CD8-positive, alpha-beta T cell (primary cell): ENCODE measurements at regions of chr7 and their contacts with region 1.

Region 1: GRCh38 chr7:11212080-11212711 is 238.5 kb downstream of the PHF14 start:
- DNase-seq: peak in 6 of 9 experiments; percentile 15 to 67 (median 38)
- ATAC-seq: peak; percentile 69
- H3K4me3 ChIP-seq: no peak overlapping the region
- H3K4me3 Mint-ChIP-seq: no peak overlapping the region
- H3K27ac ChIP-seq: no peak overlapping the region
- H3K27ac Mint-ChIP-seq: no peak overlapping the region
- H3K4me1 ChIP-seq: no peaks in the 10 kb centered on the region
- H3K4me1 Mint-ChIP-seq: peaks cover 2% of the 10 kb centered on the region
- H3K27me3 ChIP-seq: no peaks in the 10 kb centered on the region
- H3K27me3 Mint-ChIP-seq: peaks cover 4% of the 10 kb centered on the region
- CTCF ChIP-seq: peak; percentile 93

Region 2: DNA sequence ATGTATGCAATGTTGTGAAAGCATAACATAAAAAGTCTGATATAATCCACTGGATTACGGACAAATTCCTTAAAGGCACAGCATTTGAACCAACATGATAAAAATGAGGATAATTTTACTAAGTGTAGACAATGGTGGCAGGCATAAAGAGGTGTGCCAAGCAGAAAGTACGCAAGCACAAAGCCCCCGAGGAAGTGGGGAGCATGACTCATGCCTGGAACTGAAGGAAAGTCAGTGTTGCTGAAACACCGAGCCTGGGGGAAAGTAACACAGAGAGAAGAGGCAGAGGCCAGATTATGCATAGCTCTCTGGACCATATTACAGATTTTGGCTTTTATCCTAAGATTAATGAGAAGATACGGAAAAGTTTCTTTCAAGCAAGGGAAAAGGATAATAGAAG is 728.5 kb before region 1 on chr7:
- CTCF ChIA-PET with region 1: no interaction called
- POLR2A ChIA-PET with region 1: no interaction called
- intact Hi-C with region 1: no loop called
- DNase-seq: no peak
- ATAC-seq: no peak
- H3K4me3 ChIP-seq: no peak overlapping the region
- H3K4me3 Mint-ChIP-seq: no peak overlapping the region
- H3K27ac ChIP-seq: no peak overlapping the region
- H3K27ac Mint-ChIP-seq: no peak overlapping the region
- H3K4me1 ChIP-seq: no peaks in the 10 kb centered on the region
- H3K4me1 Mint-ChIP-seq: no peaks in the 10 kb centered on the region
- H3K27me3 ChIP-seq: no peaks in the 10 kb centered on the region
- H3K27me3 Mint-ChIP-seq: no peaks in the 10 kb centered on the region
- CTCF ChIP-seq: no peak

Region 3: GRCh38 chr7:10889266-10889898 is 322.8 kb before region 1 on chr7:
- CTCF ChIA-PET with region 1: interaction called, 3 read pairs
- POLR2A ChIA-PET with region 1: no interaction called
- intact Hi-C with region 1: loop called (anchors 10 kb)
- DNase-seq: peak in 8 of 9 experiments; percentile 7 to 68 (median 34)
- ATAC-seq: peak; percentile 83
- H3K4me3 ChIP-seq: no peak overlapping the region
- H3K4me3 Mint-ChIP-seq: peak overlapping the region; percentile 67
- H3K27ac ChIP-seq: no peak overlapping the region
- H3K27ac Mint-ChIP-seq: peak overlapping the region; percentile 68
- H3K4me1 ChIP-seq: peaks cover 10% of the 10 kb centered on the region
- H3K4me1 Mint-ChIP-seq: peaks cover 11% of the 10 kb centered on the region
- H3K27me3 ChIP-seq: no peaks in the 10 kb centered on the region
- H3K27me3 Mint-ChIP-seq: peaks cover 2% of the 10 kb centered on the region
- CTCF ChIP-seq: peak; percentile 84